Gastrocnemius medialis (tissue), 4 donors: ENCODE measurements at regions of chr2 and their contacts with region 1.

Region 1: GRCh38 chr2:64914735-64915509 is 74.3 kb upstream of the SLC1A4 start:
- DNase-seq: no peak
- ATAC-seq: no peak
- H3K4me3 ChIP-seq: no peak overlapping the region
- H3K27ac ChIP-seq: no peak overlapping the region
- H3K4me1 ChIP-seq: peaks cover 0 to 10% of the 10 kb centered on the region in 2 donors
- H3K27me3 ChIP-seq: no peaks in the 10 kb centered on the region
- CTCF ChIP-seq: no peak
- POLR2A ChIP-seq: no peak

Region 2: DNA sequence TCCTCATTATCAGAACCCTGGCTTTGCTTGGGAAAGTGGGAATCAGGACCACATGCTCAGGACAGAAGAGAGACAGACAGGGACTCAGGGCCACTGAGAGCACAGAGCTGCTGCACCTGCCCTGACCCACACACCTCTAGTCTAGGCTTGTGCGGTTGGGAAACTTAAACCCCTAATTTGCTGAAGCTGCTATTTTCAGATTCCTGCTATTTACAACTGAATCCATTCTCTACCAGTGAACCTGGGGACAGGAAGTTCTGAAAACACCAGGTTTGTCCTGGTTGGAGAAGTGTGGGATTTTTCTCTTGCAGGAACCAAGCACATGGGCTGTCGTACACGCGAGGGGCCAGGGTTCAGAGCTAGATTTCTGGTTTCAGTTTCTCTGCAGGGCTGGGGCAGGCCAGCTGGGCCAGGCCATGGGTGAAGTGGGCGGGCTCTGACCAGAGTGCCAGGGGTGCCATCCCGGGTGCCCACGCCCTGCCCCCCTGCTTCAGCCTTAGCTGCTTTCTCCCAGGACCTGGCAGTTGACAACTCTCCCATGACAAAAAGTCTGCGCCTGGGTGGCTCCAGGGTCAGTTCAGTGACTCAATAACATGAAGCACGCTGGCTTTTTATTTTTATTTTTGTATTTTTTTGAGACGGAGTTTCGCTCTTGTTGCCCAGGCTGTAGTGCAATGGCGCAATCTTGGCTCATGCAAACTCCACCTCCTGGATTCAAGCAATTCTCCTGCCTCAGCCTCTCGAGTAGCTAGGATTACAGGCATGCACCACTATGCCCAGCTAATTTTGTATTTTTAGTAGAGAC is 23.0 kb after region 1 on chr2:
- in situ Hi-C with region 1: no loop called
- intact Hi-C with region 1: loop called (anchors 1 kb)
- DNase-seq: peak; percentile 26 to 89
- ATAC-seq: peak; percentile 42 to 84
- H3K4me3 ChIP-seq: peak overlapping the region; percentile 43 to 52 (median 48)
- H3K27ac ChIP-seq: peak overlapping the region; percentile 87 to 91 (median 90)
- H3K4me1 ChIP-seq: peaks cover 24 to 29% of the 10 kb centered on the region in 2 donors
- H3K27me3 ChIP-seq: no peaks in the 10 kb centered on the region
- CTCF ChIP-seq: peak in 1 of 5 experiments; percentile 15
- POLR2A ChIP-seq: peak in 1 of 2 donors; percentile 14

Region 3: GRCh38 chr2:65040400-65041261 is 125.7 kb after region 1 on chr2:
- in situ Hi-C with region 1: loop called (anchors 5 kb)
- intact Hi-C with region 1: loop called (anchors 1 kb)
- DNase-seq: peak; percentile 78 to 86
- ATAC-seq: peak; percentile 97
- H3K4me3 ChIP-seq: peak overlapping the region in 1 of 4 donors; percentile 37
- H3K27ac ChIP-seq: no peak overlapping the region
- H3K4me1 ChIP-seq: peaks cover 0 to 5% of the 10 kb centered on the region in 2 donors
- H3K27me3 ChIP-seq: no peaks in the 10 kb centered on the region
- CTCF ChIP-seq: peak; percentile 94 to 98 (median 95)
- POLR2A ChIP-seq: no peak

Region 4: GRCh38 chr2:65186872-65187851 is 272.2 kb after region 1 on chr2:
- in situ Hi-C with region 1: loop called in 2 of 4 experiments (anchors 10 to 25 kb)
- intact Hi-C with region 1: loop called (anchors 5 kb)
- DNase-seq: peak; percentile 53 to 77
- ATAC-seq: peak; percentile 98 to 99
- H3K4me3 ChIP-seq: no peak overlapping the region
- H3K27ac ChIP-seq: no peak overlapping the region
- H3K4me1 ChIP-seq: peaks cover 3 to 7% of the 10 kb centered on the region in 2 donors
- H3K27me3 ChIP-seq: no peaks in the 10 kb centered on the region
- CTCF ChIP-seq: peak; percentile 41 to 85 (median 76)
- POLR2A ChIP-seq: no peak

Region 5: DNA sequence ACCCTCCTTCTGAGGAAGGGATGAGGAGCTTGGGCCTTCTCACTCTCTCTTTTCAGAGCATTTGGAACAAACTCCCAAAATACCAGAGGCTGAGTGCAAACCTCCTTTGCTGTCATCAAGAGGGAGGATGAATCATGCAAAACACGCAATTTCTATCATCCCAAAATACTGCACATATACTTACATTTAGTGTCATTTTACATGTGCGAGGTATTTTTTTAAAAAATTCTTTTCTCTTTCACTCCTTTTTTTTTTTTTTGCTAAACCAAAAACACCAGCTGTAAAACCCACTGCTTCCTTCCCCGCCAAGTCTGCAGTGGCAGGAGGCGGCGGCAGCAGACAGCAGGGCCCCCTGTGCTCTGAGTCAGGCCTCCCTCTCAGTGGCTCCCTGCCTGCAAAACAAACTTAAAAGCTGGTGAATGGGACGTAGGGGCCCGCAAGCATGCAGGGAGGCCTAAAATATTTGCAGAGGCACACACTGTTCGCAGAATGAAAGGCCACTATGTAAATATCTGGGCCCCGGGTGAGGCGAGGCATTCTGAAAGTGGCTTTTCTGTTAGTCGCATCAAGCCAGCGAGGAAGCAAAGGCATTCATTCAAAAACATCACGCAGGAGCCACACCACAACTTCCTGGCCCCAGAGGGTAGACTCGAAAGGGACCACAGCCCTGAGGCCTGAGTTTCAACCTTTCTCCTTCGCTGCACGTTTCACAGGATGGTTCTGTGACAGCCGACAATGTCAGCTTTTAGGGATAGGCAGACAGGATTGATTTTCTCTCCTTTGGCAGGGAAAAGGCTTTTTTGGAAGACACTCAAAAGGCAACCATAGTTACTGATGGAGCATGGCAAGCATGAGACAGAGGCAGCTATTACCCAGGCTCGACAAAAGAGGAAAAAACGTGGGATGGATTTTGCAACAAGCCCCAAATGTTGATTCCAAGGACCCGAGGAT is 386.1 kb after region 1 on chr2:
- in situ Hi-C with region 1: no loop called
- intact Hi-C with region 1: no loop called
- DNase-seq: peak in 1 of 2 donors; percentile 33
- ATAC-seq: peak; percentile 31 to 38
- H3K4me3 ChIP-seq: peak overlapping the region in 1 of 4 donors; percentile 5
- H3K27ac ChIP-seq: peak overlapping the region; percentile 50 to 71 (median 62)
- H3K4me1 ChIP-seq: peaks cover 28 to 31% of the 10 kb centered on the region in 2 donors
- H3K27me3 ChIP-seq: no peaks in the 10 kb centered on the region
- CTCF ChIP-seq: no peak
- POLR2A ChIP-seq: no peak

Region 6: GRCh38 chr2:65475000-65475399 is 560.1 kb after region 1 on chr2:
- in situ Hi-C with region 1: no loop called
- intact Hi-C with region 1: no loop called
- DNase-seq: no peak
- ATAC-seq: no peak
- H3K4me3 ChIP-seq: no peak overlapping the region
- H3K27ac ChIP-seq: no peak overlapping the region
- H3K4me1 ChIP-seq: no peaks in the 10 kb centered on the region
- H3K27me3 ChIP-seq: no peaks in the 10 kb centered on the region
- CTCF ChIP-seq: no peak
- POLR2A ChIP-seq: no peak

Region 7: DNA sequence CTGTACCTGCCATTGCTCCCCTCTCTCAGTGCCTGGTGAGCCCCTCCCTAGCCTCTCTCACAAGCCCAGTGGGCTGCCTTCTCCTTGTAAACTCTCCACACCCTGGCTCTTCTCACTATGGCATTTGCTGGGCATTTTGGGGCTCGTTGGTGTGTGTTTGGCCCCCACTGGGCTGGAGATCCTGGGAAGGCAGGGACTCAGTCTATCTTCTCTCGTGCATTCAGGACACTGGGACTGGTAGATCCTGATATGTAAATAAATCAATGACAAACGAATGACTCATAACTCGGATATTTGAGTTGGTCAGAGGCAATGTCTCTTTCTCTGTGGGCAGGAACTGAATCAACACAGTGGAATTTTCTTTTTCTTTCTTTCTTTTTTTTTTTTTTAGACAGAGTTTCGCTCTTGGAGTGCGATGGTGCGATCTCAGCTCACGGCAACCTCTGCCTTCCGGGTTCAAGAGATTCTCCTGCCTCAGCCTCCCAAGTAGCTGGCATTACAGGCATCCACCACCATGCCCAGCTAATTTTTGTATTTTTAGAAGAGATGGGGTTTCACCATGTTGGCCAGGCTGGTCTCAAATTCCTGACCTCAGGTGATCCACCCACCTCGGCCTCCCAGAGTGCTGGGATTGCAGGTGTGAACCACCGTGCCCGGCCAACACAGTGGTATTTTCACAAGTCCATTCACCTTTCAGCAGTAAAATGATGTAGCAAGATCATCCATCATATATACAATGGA is 662.1 kb after region 1 on chr2:
- in situ Hi-C with region 1: loop called in 3 of 4 experiments (anchors 25 kb)
- intact Hi-C with region 1: loop called (anchors 5 kb)
- DNase-seq: no peak
- ATAC-seq: no peak
- H3K4me3 ChIP-seq: no peak overlapping the region
- H3K27ac ChIP-seq: no peak overlapping the region
- H3K4me1 ChIP-seq: peaks cover 0 to 7% of the 10 kb centered on the region in 2 donors
- H3K27me3 ChIP-seq: no peaks in the 10 kb centered on the region
- CTCF ChIP-seq: no peak
- POLR2A ChIP-seq: no peak